Colonic mucosa (tissue), 4 donors: ENCODE measurements at regions of chr13 and their contacts with region 1.

Region 1: DNA sequence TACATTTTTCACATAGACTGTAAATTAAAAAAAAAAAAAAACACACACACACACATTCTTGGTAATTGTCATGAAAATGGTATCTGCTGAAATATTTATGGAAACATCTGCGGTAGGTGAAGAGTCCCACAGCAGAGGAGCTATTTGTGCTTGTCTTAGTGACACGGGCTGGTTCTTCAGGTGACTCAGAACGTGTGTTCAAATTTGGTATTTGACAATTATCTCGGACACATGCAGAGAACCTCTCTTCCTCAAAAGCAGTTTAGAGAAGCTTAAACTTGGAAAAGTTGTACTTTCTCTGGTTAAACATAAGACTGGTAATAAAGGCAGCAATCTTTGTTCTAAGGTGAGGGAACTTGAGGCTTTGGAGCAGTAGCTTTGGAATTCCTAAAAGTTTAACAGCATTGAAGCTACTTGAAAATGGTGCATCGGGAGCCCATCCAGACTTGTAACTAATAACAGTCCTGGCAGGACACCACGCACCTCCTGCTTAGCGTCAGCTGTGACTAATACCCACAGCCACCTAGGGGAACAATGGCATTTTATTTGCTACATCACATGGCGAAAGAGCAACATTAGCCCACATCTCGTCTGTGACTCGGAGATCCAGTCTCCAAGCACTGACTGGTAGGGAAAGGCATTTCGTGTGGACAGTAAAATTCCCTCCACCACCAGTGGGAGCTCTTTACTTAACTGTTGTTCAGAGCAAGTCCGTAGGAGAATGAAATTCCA is 1505.1 kb upstream of the SLC10A2 start:
- DNase-seq: peak; percentile 72
- H3K4me3 ChIP-seq: no peak overlapping the region
- H3K27ac ChIP-seq: no peak overlapping the region
- H3K4me1 ChIP-seq: no peaks in the 10 kb centered on the region
- H3K27me3 ChIP-seq: no peaks in the 10 kb centered on the region
- CTCF ChIP-seq: peak; percentile 57

Region 2: DNA sequence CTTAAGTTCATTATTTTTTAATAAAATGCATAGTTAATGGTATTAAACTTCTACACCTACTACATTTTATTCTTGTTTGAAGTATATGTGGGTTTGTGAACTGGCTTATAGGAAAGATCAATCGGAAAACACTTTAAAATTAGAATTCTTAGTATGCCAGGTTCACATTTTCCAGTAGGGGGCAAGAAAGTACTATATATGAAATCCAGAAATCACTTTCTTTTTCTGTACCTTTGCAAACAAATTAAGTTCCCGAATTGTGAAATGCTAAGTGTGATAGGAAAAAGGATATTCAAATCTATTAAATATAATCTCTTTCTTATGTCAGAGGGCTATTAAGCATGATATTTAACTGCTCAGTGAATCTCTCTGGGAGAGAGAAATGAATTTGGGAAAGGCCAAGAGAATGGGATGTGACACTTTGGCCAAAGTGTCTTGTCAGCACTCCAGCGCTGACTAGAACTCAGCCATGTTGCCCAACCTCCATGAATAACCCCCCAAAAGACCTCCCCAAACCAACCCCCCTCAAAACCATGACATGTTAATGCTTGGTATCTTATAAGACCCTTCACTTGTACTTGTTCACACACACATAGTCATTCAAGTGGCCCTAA is 1382.5 kb before region 1 on chr13:
- intact Hi-C with region 1: loop called (anchors 10 kb)
- DNase-seq: no peak
- H3K4me3 ChIP-seq: no peak overlapping the region
- H3K27ac ChIP-seq: no peak overlapping the region
- H3K4me1 ChIP-seq: no peaks in the 10 kb centered on the region
- H3K27me3 ChIP-seq: no peaks in the 10 kb centered on the region
- CTCF ChIP-seq: peak; percentile 41

Region 3: GRCh38 chr13:104773775-104774174 is 202.4 kb after region 1 on chr13:
- intact Hi-C with region 1: loop called (anchors 10 kb)
- DNase-seq: no peak
- H3K4me3 ChIP-seq: no peak overlapping the region
- H3K27ac ChIP-seq: no peak overlapping the region
- H3K4me1 ChIP-seq: no peaks in the 10 kb centered on the region
- H3K27me3 ChIP-seq: no peaks in the 10 kb centered on the region
- CTCF ChIP-seq: peak; percentile 35

Region 4: GRCh38 chr13:105184201-105184600 is 612.9 kb after region 1 on chr13:
- intact Hi-C with region 1: no loop called
- DNase-seq: no peak
- H3K4me3 ChIP-seq: no peak overlapping the region
- H3K27ac ChIP-seq: no peak overlapping the region
- H3K4me1 ChIP-seq: no peaks in the 10 kb centered on the region
- H3K27me3 ChIP-seq: no peaks in the 10 kb centered on the region
- CTCF ChIP-seq: no peak